ENCODE measurements at regions of chr1 and their contacts with region 1.

Region 1: GRCh38 chr1:37807555-37808368 is at the starts of genes C1orf122 and YRDC:
- DNase-seq: peak; percentile 77
- ATAC-seq: peak; percentile 84
- H3K4me3 ChIP-seq: peak within 1 kb of the TSS; percentile 78 to 98
- H3K27ac ChIP-seq: peak within 1 kb of the TSS; percentile 93
- H3K4me1 ChIP-seq: peaks cover 16 to 37% of the 10 kb centered on the region in 2 experiments
- H3K27me3 ChIP-seq: no peaks in the 10 kb centered on the region
- CTCF ChIP-seq: no peak
- POLR2A ChIP-seq: peak; percentile 71
- RAD21 ChIP-seq: no peak
- total RNA-seq, gene C1orf122: 34.2 TPM
- total RNA-seq, gene YRDC: 41.4 TPM

Region 2: DNA sequence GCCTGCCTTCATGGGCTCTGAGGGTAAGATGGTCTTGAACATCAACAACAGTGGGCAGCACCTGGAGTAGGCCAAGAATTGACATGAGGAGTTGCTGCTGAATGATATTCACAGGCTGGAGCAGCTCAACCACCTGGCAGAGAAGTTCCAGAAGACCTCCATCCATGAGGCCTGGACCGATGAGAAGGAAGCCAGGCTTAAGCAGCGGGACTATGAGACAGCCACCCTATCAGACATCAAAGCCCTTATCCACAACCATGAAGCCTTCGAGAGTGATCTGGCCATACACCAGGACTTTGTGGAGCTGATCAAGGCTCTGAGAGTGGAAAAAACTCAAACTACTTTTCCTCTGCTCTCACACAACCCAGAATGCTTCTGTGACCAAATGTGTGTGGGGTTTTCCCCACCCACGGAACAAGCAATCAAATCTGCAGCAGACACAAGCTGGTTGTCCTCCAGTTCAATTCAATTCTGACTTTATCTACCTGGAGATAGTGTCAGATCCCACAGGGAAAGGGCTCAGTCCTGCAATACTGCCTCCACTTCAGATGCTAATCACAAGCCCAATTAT is 30.7 kb before region 1 on chr1:
- CTCF ChIA-PET with region 1: no interaction called
- POLR2A ChIA-PET with region 1: no interaction called
- RAD21 ChIA-PET with region 1: no interaction called
- intact Hi-C with region 1: no loop called
- DNase-seq: no peak
- ATAC-seq: no peak
- H3K4me3 ChIP-seq: no peak overlapping the region
- H3K27ac ChIP-seq: no peak overlapping the region
- H3K4me1 ChIP-seq: no peaks in the 10 kb centered on the region
- H3K27me3 ChIP-seq: no peaks in the 10 kb centered on the region
- CTCF ChIP-seq: no peak
- POLR2A ChIP-seq: no peak
- RAD21 ChIP-seq: no peak

Region 3: GRCh38 chr1:37859507-37860345 is 52.0 kb after region 1 on chr1 and contains the start of gene MTF1:
- CTCF ChIA-PET with region 1: interaction called, 7 read pairs
- POLR2A ChIA-PET with region 1: interaction called, 10 read pairs
- RAD21 ChIA-PET with region 1: interaction called, 4 read pairs
- intact Hi-C with region 1: loop called (anchors 1 kb)
- DNase-seq: peak; percentile 93
- ATAC-seq: peak; percentile 97
- H3K4me3 ChIP-seq: peak within 1 kb of the TSS; percentile 94 to 99
- H3K27ac ChIP-seq: peak within 1 kb of the TSS; percentile 85
- H3K4me1 ChIP-seq: peaks cover 11 to 16% of the 10 kb centered on the region in 2 experiments
- H3K27me3 ChIP-seq: no peaks in the 10 kb centered on the region
- CTCF ChIP-seq: peak; percentile 72 to 93 (median 85)
- POLR2A ChIP-seq: no peak
- RAD21 ChIP-seq: peak; percentile 70
- total RNA-seq, gene MTF1: 21.2 TPM

Region 4: DNA sequence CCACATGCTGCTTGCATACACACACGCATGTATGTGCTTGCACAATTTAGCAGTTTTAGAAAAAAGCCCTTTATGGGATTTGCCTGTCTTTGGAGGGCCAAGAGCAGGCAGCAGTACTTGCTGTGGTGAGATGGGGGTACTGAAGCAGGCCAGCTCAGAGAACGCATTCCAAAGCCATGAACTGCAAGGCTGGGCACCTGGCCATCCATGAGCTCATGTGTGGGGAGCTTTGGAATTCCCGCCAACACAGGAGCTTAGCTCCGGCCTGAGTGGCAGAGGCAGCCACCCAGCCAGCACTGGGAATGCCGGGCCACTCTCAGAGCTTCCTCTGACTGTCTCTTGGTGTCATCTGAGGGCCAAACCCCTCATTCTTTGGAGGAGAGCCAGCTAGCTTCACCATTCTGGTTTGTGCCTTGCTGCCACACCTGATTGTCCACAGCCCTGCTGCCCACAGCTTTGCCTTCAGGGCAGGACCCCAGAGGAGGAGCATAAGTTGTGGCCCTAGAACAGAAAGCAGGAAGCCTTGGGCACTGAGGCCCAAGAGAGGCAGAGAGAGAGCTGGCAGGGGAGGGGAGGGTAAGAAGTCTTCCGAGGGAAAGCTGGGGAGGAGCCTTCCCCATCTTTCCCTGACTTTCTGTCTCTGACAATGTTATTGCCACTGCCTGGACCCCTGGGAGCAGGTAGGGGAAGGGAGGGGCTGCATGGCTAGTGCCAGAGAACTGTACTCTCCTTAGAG is 330.9 kb after region 1 on chr1:
- CTCF ChIA-PET with region 1: no interaction called
- POLR2A ChIA-PET with region 1: no interaction called
- RAD21 ChIA-PET with region 1: no interaction called
- intact Hi-C with region 1: no loop called
- DNase-seq: peak; percentile 43
- ATAC-seq: peak; percentile 87
- H3K4me3 ChIP-seq: no peak overlapping the region
- H3K27ac ChIP-seq: no peak overlapping the region
- H3K4me1 ChIP-seq: peaks cover 8 to 13% of the 10 kb centered on the region in 2 experiments
- H3K27me3 ChIP-seq: peaks cover 29% of the 10 kb centered on the region; the same call in 1 of the 2 replicates
- CTCF ChIP-seq: no peak
- POLR2A ChIP-seq: no peak
- RAD21 ChIP-seq: no peak